ENCODE measurements at regions of chr9 and their contacts with region 1.

Region 1: GRCh38 chr9:75027187-75028107 is 646 bp downstream of the CARNMT1 start:
- DNase-seq: peak; percentile 72
- H3K4me3 ChIP-seq: peak overlapping the region; percentile 74
- H3K27ac ChIP-seq: peak overlapping the region; percentile 90
- H3K4me1 ChIP-seq: peaks cover 27% of the 10 kb centered on the region
- CTCF ChIP-seq: peak; percentile 54; the same call in 1 of the 2 replicates

Region 2: GRCh38 chr9:74711341-74711740 is 316.1 kb before region 1 on chr9:
- CTCF ChIA-PET with region 1: no interaction called
- POLR2A ChIA-PET with region 1: no interaction called
- intact Hi-C with region 1: no loop called
- DNase-seq: no peak
- H3K4me3 ChIP-seq: no peak overlapping the region
- H3K27ac ChIP-seq: no peak overlapping the region
- H3K4me1 ChIP-seq: no peaks in the 10 kb centered on the region
- CTCF ChIP-seq: no peak

Region 3: DNA sequence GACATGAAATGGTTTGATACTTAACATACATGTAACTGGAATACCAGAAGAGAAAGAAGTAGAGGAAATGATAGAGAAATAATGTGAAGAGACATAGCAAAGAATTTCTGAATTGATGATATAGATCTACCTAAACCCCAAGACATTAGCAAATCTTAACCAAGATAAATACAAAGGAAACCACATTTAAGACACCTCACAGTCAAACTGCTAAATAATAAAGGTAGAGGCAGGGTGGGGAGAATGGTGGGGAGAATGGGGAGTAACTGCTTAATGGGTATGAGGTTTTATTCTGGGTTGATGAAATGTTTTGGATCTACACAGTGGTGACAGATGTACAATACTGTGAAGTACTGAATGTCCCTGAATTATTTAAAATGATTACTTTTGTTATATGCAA is 16.9 kb before region 1 on chr9:
- CTCF ChIA-PET with region 1: interaction called, 3 read pairs
- POLR2A ChIA-PET with region 1: interaction called, 17 read pairs
- intact Hi-C with region 1: no loop called
- DNase-seq: no peak
- H3K4me3 ChIP-seq: no peak overlapping the region
- H3K27ac ChIP-seq: no peak overlapping the region
- H3K4me1 ChIP-seq: no peaks in the 10 kb centered on the region
- CTCF ChIP-seq: no peak

Region 4: DNA sequence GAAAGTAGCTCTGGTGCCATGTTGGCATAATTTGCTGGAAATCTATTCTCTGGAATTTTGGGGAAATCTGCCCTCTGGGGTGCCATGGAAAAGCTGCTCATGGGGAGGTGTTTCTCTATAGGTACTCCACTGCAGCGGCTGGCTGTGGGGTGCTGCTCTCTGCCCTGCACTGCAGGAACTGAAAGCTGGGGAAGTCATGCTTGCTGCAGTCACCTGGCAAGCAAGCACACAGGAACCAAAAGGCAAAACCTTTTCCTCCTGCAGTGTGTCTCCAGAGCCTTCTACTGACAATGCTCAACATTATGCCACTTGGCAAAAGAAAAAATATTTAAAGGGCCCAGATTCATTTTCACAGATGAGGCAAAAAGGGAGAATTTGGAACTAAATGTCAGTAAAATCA is 26.4 kb after region 1 on chr9:
- CTCF ChIA-PET with region 1: interaction called, 6 read pairs
- POLR2A ChIA-PET with region 1: interaction called, 26 read pairs
- intact Hi-C with region 1: loop called (anchors 1 kb)
- DNase-seq: peak; percentile 86
- H3K4me3 ChIP-seq: no peak overlapping the region
- H3K27ac ChIP-seq: peak overlapping the region; percentile 43
- H3K4me1 ChIP-seq: peaks cover 24% of the 10 kb centered on the region
- CTCF ChIP-seq: no peak

Region 5: GRCh38 chr9:75064307-75065025 is 37.0 kb after region 1 on chr9:
- CTCF ChIA-PET with region 1: no interaction called
- POLR2A ChIA-PET with region 1: interaction called, 10 read pairs
- intact Hi-C with region 1: no loop called
- DNase-seq: no peak
- H3K4me3 ChIP-seq: no peak overlapping the region
- H3K27ac ChIP-seq: no peak overlapping the region
- H3K4me1 ChIP-seq: peaks cover 6% of the 10 kb centered on the region
- CTCF ChIP-seq: no peak

Region 6: DNA sequence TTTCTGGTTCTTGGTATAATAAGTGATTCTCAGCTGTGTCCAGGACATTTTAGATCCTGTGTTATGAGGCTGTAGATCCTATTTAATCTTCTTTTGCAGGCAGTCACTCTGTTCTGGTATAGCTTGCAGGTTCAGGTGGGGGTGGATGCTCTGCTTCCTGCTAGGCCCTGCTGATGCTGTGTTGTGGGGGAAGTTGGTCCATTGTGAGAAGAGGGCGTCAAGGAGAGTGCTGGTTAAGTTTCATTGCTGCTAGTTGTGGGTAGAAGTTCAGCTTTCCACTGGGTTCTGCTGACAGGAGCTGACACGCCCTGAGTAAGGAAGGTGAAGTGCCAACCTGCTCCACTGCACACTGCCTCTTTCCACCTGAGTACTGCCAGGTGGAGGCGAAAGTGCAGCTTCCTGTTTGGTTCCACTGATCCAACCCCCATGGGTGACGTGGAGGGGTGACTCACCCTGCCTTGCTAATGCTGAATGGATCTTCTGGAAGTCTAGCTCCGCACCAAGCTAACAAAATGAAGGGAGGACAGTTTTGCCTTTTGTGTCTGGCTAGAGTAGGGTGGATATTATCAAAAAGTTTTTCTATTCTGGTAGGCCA is 44.2 kb after region 1 on chr9:
- CTCF ChIA-PET with region 1: interaction called, 4 read pairs
- POLR2A ChIA-PET with region 1: interaction called, 22 read pairs
- intact Hi-C with region 1: no loop called
- DNase-seq: peak; percentile 60
- H3K4me3 ChIP-seq: no peak overlapping the region
- H3K27ac ChIP-seq: peak overlapping the region; percentile 4
- H3K4me1 ChIP-seq: peaks cover 13% of the 10 kb centered on the region
- CTCF ChIP-seq: no peak

Region 7: DNA sequence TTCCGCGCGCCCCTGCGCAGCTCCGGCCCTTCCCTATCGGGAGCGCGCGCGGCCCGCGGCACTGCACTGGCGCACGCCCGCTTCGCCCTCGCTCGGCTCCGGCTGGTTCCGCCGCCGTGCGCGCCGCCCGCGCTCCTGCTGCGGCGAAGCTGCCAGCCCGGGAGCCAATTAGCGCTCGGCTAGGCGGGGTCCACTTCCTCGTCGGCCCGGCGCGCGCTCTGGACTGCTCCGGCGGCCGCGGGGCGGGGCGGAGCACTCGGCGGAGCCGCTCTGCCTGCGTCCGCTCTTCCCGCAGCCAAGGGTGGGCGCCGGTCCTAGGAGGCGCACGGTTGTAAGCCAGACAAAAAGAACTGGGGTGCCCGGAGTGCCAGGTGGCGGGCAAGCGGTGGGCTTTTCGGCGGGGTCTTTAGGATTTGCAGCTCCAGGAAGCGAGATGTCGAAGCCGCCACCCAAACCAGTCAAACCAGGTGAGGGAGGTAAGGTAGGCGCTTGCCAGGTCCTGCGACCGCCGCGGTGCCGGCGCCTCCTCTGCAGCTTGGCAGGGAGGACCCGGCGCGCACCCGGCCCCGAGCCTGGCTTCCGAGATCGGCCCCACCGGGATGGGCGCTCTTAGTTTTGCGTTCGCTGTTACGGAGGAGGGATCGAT is 60.9 kb after region 1 on chr9 and contains the start of gene OSTF1:
- CTCF ChIA-PET with region 1: interaction called, 6 read pairs
- POLR2A ChIA-PET with region 1: interaction called, 70 read pairs
- intact Hi-C with region 1: loop called (anchors 1 kb)
- DNase-seq: peak; percentile 97
- H3K4me3 ChIP-seq: peak within 1 kb of the TSS; percentile 93
- H3K27ac ChIP-seq: peak within 1 kb of the TSS; percentile 85
- H3K4me1 ChIP-seq: peaks cover 44% of the 10 kb centered on the region
- CTCF ChIP-seq: no peak
- total RNA-seq, gene OSTF1: 37.3 and 49.9 TPM in 2 replicates